Activated CD4-positive, alpha-beta memory T cell treated with anti-CD3 and anti-CD28 coated beads, Interleukin-2, amount 10 ng/mL, durations not matched to agents 7 days and 5 days (primary cell): ENCODE measurements at regions of chr17 and their contacts with region 1.

Region 1: DNA sequence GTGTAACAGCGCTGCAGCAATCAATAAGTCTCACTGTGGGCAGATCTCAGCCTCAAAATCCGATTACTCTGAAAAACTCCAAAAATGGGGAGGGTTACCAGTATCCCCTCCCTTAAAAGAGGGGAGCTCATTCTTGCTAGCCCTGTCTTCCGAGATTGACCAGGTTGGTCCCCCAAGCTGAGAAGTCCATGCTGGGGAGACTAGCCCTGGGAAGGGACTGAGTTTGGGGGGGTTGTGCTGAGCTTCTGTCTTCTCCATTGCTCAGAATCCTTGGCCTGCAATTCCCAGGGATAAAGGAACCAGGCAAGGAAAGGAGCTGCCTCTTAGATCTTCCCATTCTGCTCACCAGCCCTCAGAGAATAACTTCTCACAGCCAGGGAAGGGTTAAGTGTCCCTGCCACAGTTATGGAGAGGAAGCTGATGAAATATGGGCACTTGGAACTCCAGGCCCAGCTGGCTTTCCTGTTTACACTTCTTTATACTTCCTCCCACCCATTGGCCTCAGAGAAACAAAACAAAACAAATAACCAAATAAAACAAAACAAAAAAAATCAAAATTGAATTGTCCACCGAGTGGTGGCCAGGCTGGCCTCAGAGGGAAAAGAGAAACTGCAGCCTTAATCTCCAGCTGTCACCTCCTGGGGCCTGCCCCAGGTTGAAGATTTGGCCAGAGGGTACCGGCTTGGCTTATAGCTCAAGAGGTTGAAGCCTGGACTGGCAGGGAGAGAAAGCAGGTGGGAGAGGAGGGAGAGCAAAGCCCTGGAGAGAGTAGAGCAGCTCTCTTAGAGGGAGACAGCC is 2.6 kb downstream of the HOXB3 start:
- DNase-seq: no peak
- H3K4me3 Mint-ChIP-seq: no peak overlapping the region
- H3K27ac Mint-ChIP-seq: no peak overlapping the region
- H3K4me1 Mint-ChIP-seq: peaks cover 45% of the 10 kb centered on the region
- H3K27me3 Mint-ChIP-seq: peaks cover 79% of the 10 kb centered on the region

Region 2: DNA sequence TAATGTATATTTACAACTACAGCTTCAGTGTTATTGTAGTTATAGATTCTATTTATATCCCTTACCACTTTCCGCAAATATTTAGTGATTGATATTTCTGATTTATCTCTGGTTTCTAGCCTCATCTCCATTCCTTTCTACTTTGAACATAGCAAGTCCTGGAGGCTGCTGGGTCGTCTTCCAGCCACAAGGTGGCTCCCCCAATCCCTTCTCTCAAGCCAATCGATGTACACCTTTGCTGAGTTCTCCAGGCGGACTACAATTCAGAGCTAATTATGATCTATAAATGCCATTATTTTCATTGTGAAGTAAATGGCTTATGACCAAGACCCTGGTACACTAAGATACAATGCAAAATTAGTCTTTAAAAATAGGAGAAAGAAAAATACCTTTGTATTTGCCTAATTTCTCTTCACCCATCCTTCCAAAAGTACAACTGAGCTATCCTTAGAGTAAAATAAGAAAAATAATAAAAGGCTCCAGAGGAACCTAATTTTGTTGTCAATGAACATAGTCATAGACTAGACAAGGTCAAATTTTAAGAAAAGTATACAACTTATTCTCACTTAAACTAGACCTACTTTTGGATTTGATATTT is 279.6 kb before region 1 on chr17:
- CTCF ChIA-PET with region 1: interaction called, 27 read pairs
- POLR2A ChIA-PET with region 1: no interaction called
- DNase-seq: peak; percentile 54
- H3K4me3 Mint-ChIP-seq: no peak overlapping the region
- H3K27ac Mint-ChIP-seq: no peak overlapping the region
- H3K4me1 Mint-ChIP-seq: peaks cover 7% of the 10 kb centered on the region
- H3K27me3 Mint-ChIP-seq: no peaks in the 10 kb centered on the region

Region 3: GRCh38 chr17:48678141-48678971 is 90.9 kb after region 1 on chr17:
- CTCF ChIA-PET with region 1: no interaction called
- POLR2A ChIA-PET with region 1: no interaction called
- DNase-seq: peak; percentile 71
- H3K4me3 Mint-ChIP-seq: no peak overlapping the region
- H3K27ac Mint-ChIP-seq: no peak overlapping the region
- H3K4me1 Mint-ChIP-seq: no peaks in the 10 kb centered on the region
- H3K27me3 Mint-ChIP-seq: peaks cover 53% of the 10 kb centered on the region